ENCODE measurements at regions of chr12 and their contacts with region 1.

Region 1: GRCh38 chr12:109428037-109428629 is 49.0 kb downstream of the KCTD10 start:
- DNase-seq: peak; percentile 79 to 87 (median 85)
- ATAC-seq: peak; percentile 95
- H3K4me3 ChIP-seq: no peak overlapping the region
- H3K27ac ChIP-seq: no peak overlapping the region
- H3K4me1 ChIP-seq: no peaks in the 10 kb centered on the region; a peak in 1 of 5 replicates
- H3K27me3 ChIP-seq: peaks cover 7 to 33% of the 10 kb centered on the region in 2 experiments; a peak in 4 of 5 replicates
- CTCF ChIP-seq: peak; percentile 92 to 98 (median 96)
- EP300 ChIP-seq: no peak
- POLR2A ChIP-seq: no peak
- RAD21 ChIP-seq: peak; percentile 54 to 86

Region 2: GRCh38 chr12:109232731-109233130 is 195.4 kb before region 1 on chr12:
- CTCF ChIA-PET with region 1: no interaction called
- POLR2A ChIA-PET with region 1: no interaction called
- in situ Hi-C with region 1: no loop called
- intact Hi-C with region 1: no loop called
- DNase-seq: no peak
- ATAC-seq: no peak
- H3K4me3 ChIP-seq: no peak overlapping the region
- H3K27ac ChIP-seq: no peak overlapping the region
- H3K4me1 ChIP-seq: no peaks in the 10 kb centered on the region
- H3K27me3 ChIP-seq: peaks cover 15 to 51% of the 10 kb centered on the region in 2 experiments
- CTCF ChIP-seq: no peak
- EP300 ChIP-seq: no peak
- POLR2A ChIP-seq: no peak
- RAD21 ChIP-seq: no peak

Region 3: GRCh38 chr12:109244073-109244472 is 184.1 kb before region 1 on chr12:
- CTCF ChIA-PET with region 1: no interaction called
- POLR2A ChIA-PET with region 1: no interaction called
- in situ Hi-C with region 1: no loop called
- intact Hi-C with region 1: no loop called
- DNase-seq: no peak
- ATAC-seq: no peak
- H3K4me3 ChIP-seq: no peak overlapping the region
- H3K27ac ChIP-seq: no peak overlapping the region
- H3K4me1 ChIP-seq: no peaks in the 10 kb centered on the region; a peak in 1 of 5 replicates
- H3K27me3 ChIP-seq: peaks cover 14 to 42% of the 10 kb centered on the region in 2 experiments; a peak in 4 of 5 replicates
- CTCF ChIP-seq: no peak
- EP300 ChIP-seq: no peak
- POLR2A ChIP-seq: no peak
- RAD21 ChIP-seq: no peak

Region 4: DNA sequence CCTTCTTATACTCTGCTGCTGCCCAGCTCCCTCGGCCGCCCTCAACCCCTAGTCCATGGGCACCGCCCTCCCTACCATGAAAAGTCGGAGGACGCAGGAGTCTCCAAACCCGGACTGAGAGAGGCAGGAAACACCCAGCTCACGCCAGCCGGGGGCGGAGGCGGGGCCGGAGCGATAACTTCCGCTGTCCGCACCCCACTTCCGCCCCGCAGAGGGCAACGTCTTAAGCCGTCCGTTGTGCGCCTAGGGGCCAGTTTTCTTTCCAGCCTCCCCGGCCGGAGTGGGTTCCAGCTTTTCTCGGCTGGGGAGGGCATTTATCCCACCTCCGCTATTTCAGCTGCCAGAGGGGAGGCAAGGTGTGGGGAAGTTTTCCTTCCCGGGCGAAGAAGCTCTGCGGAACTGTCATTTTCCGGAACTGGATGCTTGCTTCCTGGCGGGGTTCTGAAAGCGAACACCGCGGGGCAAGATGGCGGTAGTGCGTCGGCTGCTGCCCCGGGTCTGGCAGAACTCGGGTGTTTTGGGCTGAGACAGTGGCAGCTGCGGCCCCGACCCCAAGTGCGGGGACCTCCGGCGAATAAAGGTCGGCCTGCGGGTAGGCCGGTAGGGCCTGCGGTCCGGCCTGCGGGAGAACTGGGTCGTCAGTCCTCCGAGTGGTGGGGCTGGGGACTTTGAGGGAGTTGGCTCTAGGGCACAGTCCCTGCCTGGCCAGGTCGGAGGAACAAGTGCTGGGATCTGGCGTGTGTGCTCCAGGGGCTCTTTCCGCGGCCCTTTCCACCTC is 49.2 kb after region 1 on chr12 and contains the starts of genes KCTD10 and UBE3B:
- CTCF ChIA-PET with region 1: no interaction called
- POLR2A ChIA-PET with region 1: interaction called, 3 read pairs
- in situ Hi-C with region 1: no loop called
- intact Hi-C with region 1: loop called (anchors 5 kb)
- DNase-seq: peak; percentile 92 to 93 (median 92)
- ATAC-seq: peak; percentile 97
- H3K4me3 ChIP-seq: peak within 1 kb of the TSS; percentile 76
- H3K27ac ChIP-seq: peak within 1 kb of the TSS; percentile 98
- H3K4me1 ChIP-seq: peaks cover 9 to 13% of the 10 kb centered on the region in 2 experiments; a peak in 4 of 5 replicates
- H3K27me3 ChIP-seq: no peaks in the 10 kb centered on the region
- CTCF ChIP-seq: no peak
- EP300 ChIP-seq: no peak
- POLR2A ChIP-seq: peak; percentile 93
- RAD21 ChIP-seq: no peak
- polyA plus RNA-seq, gene KCTD10: 1.9 to 12.3 TPM
- polyA plus RNA-seq, gene UBE3B: 7.6 to 8.1 TPM

Region 5: GRCh38 chr12:109518820-109519665 is 90.9 kb after region 1 on chr12:
- CTCF ChIA-PET with region 1: no interaction called
- POLR2A ChIA-PET with region 1: interaction called, 3 read pairs
- in situ Hi-C with region 1: no loop called
- intact Hi-C with region 1: loop called (anchors 10 kb)
- DNase-seq: peak; percentile 65 to 79 (median 76)
- ATAC-seq: peak; percentile 92
- H3K4me3 ChIP-seq: no peak overlapping the region
- H3K27ac ChIP-seq: no peak overlapping the region
- H3K4me1 ChIP-seq: no peaks in the 10 kb centered on the region
- H3K27me3 ChIP-seq: no peaks in the 10 kb centered on the region
- CTCF ChIP-seq: peak; percentile 78 to 88 (median 82)
- EP300 ChIP-seq: no peak
- POLR2A ChIP-seq: no peak
- RAD21 ChIP-seq: peak; percentile 43 to 68

Region 6: DNA sequence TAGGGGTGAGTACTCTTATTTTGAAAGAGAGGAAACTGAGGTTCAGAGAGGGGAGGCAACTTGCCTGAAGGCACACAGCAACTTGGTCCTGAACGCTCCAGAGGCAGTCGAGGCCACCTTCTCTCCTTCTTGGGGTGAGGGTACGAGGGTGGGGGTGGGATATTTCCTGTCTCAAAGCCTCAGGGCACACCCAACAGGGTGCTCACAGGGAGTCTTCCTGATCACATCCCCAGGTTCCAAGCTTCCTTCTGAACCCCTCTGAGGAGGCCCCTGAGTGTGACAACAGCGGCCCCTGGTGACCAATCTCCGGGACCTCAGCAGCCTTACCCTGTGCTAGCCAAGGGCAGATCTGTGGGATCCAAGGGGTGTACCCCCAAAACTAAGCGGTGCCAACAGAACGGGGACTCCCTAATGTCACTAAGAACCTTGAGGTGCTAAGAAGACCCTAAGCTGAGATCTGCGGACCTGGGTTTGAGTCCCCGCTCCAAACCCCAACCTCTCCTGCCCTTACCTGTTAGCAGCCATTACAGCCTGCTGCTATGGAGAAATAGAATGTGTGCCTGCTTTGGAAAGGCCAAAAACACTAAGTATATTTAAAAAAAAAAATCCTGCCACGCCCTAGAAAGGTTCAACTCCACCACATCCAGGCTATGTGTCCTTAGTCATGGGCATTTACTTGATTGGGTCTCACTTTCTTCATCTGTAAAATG is 347.2 kb after region 1 on chr12:
- CTCF ChIA-PET with region 1: interaction called, 6 read pairs
- POLR2A ChIA-PET with region 1: no interaction called
- in situ Hi-C with region 1: loop called (anchors 5 kb)
- intact Hi-C with region 1: loop called (anchors 2 kb)
- DNase-seq: peak; percentile 77 to 86 (median 84)
- ATAC-seq: peak; percentile 96
- H3K4me3 ChIP-seq: no peak overlapping the region
- H3K27ac ChIP-seq: no peak overlapping the region
- H3K4me1 ChIP-seq: peaks cover 0 to 9% of the 10 kb centered on the region in 2 experiments; a peak in 3 of 5 replicates
- H3K27me3 ChIP-seq: peaks cover 2 to 32% of the 10 kb centered on the region in 2 experiments; a peak in 4 of 5 replicates
- CTCF ChIP-seq: peak; percentile 94 to 95 (median 94)
- EP300 ChIP-seq: no peak
- POLR2A ChIP-seq: no peak
- RAD21 ChIP-seq: peak; percentile 81 to 95

Measured in K562 (cell line).